Activated T-helper 2 cell treated with anti-CD3 and anti-CD28 coated beads, Interferon-gamma antibody, Interleukin-2, Interleukin-4, amounts not matched to agents 10 μg/mL and 5 μg/mL and 100 μg/mL, durations not matched to agents 14 hours and 24 hours and 36 hours (primary cell): ENCODE measurements at regions of chr1 and their contacts with region 1.

Region 1: DNA sequence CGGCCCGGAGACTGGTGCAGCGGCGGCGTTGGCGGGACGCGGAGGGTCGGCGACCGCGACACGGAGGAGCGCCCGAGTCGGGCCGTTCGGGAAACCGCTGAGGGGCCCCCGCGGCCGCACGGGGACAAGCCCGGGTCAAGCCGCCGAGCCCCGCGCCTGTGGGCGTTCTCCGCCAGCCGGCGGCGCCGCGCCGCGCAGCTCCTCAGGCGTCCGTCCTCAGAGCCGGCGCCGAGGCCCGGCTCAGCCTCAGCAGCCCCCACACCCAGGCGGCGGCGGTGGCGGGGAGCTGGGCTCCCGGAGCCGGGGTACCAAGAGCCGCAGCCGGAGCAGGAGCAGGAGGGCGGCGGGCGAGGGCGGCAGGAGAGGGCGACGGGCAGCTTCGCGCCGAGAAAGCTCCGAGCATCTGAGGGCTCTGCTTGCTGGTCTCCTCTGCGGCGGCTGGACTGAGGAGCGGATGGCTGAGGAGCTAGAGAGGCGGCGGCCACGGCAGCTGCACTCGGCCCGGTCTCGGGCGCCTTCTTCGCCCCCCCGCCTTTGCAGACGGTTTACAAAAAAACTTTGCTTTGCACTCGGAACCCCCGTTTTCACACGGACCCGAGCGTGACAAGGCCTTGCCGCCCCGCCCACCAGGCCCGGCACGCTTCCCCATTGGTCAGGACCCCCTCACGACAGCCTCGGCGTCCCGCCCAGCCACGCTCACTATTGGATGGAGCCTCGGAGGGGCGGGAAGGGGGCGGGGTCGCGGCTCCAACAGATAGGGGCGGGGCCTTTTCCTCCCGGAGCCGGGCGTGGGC is at the start of gene SLC30A1:
- DNase-seq: peak; percentile 99
- H3K4me3 Mint-ChIP-seq: peak within 1 kb of the TSS; percentile 91
- H3K27ac Mint-ChIP-seq: peak within 1 kb of the TSS; percentile 86
- H3K4me1 Mint-ChIP-seq: peaks cover 41% of the 10 kb centered on the region
- H3K27me3 Mint-ChIP-seq: no peaks in the 10 kb centered on the region
- total RNA-seq, gene SLC30A1: 7.9 and 8.0 TPM in 2 replicates

Region 2: GRCh38 chr1:211258756-211259637 is 319.8 kb before region 1 on chr1 and contains the start of gene RCOR3:
- intact Hi-C with region 1: loop called (anchors 1 kb)
- DNase-seq: peak; percentile 91
- H3K4me3 Mint-ChIP-seq: peak within 1 kb of the TSS; percentile 88
- H3K27ac Mint-ChIP-seq: peak within 1 kb of the TSS; percentile 92
- H3K4me1 Mint-ChIP-seq: peaks cover 19% of the 10 kb centered on the region
- H3K27me3 Mint-ChIP-seq: no peaks in the 10 kb centered on the region
- total RNA-seq, gene RCOR3: 42.3 and 45.0 TPM in 2 replicates

Region 3: DNA sequence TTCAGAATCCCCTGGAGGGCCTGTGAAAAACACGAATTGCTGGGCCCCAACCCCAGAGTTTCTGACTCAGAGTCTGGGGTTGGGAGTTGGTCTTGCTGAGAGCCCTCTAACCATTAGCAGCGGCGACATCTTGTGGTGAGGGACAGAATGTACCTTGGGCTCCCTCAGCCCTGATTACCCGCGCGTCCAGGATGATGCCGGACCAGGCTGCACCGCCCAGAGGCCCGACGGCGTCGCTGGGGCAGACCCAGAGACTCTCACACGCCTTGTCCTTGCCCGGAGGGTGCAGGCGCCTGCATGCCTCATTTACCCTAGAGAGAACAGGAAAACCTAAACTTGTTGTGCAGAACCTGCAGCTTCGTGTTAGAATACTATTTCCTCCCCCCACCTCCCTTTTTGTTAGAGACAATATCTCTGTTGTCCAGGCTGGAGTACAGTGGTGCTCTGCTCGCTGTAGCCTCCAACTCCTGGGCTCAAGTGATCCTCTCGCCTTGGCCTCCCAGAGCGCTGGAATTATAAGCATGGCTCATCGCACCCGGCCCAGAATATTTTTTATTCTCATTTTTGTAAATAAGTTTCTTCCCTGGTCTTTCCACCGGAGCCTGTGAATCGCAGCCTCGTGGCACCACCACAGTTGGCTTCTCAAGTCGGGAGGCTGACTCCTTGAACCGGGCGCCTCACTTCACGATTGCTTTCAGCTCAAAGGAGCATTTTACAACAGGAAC is 64.6 kb before region 1 on chr1:
- intact Hi-C with region 1: loop called (anchors 1 kb)
- DNase-seq: peak; percentile 65
- H3K4me3 Mint-ChIP-seq: peak overlapping the region; percentile 65
- H3K27ac Mint-ChIP-seq: peak overlapping the region; percentile 44
- H3K4me1 Mint-ChIP-seq: peaks cover 30% of the 10 kb centered on the region
- H3K27me3 Mint-ChIP-seq: peaks cover 7% of the 10 kb centered on the region

Region 4: DNA sequence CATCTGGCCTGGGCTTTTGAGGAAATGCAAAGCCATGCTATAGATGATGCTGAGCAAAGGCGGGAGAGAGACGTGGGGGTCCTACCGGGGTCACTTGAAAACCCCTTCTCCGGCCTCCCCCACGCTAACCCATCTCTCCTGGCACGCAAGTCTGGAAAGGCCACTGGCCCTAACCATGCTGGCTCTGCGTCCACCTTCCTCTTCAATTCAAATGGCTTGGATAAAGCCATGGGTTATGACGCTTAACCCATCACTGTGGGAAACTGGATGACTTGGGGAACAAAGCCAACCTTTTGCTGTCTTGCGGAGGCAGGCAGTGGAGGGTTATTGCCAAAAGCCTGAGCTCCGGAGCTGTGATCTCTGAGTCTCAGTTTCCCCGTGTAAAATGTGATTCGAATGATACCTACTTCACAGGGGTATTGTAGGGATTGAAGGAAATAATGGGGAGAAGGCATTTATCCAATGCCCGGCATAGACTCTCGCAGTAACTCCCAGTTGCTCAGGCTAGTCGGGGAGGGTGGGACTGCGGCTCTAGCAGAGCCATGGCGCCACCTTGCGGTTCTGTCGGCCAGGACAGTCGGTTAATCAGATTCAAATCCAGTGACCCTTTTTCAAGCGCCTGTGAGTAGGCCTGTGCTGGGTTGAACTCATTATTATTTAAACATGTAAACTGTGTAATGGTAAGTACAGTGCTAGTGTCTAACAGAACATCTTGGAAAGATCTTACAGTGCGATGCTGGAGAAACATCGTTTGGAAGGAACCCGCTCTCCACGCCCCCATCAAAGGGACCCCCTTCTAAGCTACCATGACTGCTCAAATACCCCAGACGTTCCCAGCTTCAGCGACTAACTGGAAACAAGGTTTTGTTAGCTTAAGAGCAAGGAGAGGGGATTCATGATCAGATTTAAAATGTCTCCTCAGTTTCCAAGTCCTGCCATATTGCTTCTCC is 76.3 kb after region 1 on chr1:
- intact Hi-C with region 1: loop called (anchors 1 kb)
- DNase-seq: peak; percentile 72
- H3K4me3 Mint-ChIP-seq: no peak overlapping the region
- H3K27ac Mint-ChIP-seq: no peak overlapping the region
- H3K4me1 Mint-ChIP-seq: peaks cover 5% of the 10 kb centered on the region
- H3K27me3 Mint-ChIP-seq: peaks cover 3% of the 10 kb centered on the region

Region 5: DNA sequence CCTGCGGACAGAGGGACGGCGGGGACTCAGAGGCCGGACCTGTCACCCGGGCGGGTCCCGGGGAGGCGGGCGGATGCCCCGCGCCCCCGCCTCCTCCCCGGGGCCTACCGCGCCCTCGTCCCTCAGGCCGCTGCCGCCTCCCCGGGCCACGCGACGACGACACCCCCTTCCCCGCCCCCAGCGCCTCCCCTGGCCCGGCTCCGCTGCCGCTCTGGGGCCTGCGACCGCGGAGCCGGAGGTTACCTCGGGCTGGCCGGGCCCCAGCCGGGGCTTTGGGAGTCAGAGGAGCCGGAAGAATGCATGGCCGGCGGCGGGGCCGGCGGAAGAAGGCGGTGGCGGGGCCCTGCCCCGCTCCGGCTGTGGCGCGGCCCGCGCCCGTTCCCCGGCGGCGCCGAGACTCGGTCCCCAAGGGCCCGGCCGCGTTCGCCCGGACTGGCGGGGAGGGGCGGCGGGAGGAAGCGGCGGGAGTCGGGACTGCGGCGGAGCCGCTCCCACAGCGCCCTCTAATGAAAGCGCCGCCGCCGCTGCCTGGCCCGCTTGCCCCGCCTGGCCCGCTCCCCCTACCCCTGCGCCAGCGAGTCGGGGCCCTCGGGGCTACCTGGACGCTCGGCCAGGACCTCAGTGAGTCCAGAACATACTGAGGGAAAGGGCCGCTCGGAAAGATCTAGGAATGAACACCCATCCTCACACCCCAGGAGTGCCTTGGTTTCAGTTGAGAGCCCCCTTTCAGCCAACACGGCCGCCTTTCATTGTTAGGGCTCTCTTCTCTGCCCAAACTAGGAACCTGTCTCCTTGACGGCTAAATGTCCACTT is 251.7 kb after region 1 on chr1 and contains the start of gene LPGAT1:
- intact Hi-C with region 1: loop called (anchors 10 kb)
- DNase-seq: peak; percentile 67
- H3K4me3 Mint-ChIP-seq: peak within 1 kb of the TSS; percentile 92
- H3K27ac Mint-ChIP-seq: peak within 1 kb of the TSS; percentile 78
- H3K4me1 Mint-ChIP-seq: peaks cover 55% of the 10 kb centered on the region
- H3K27me3 Mint-ChIP-seq: peaks cover 6% of the 10 kb centered on the region
- total RNA-seq, gene LPGAT1: 27.8 and 31.1 TPM in 2 replicates

Region 6: GRCh38 chr1:212035123-212035834 is 456.4 kb after region 1 on chr1 and contains the starts of genes DTL and INTS7:
- intact Hi-C with region 1: loop called (anchors 1 kb)
- DNase-seq: peak; percentile 99
- H3K4me3 Mint-ChIP-seq: peak within 1 kb of the TSS; percentile 95
- H3K27ac Mint-ChIP-seq: peak within 1 kb of the TSS; percentile 85
- H3K4me1 Mint-ChIP-seq: peaks cover 58% of the 10 kb centered on the region
- H3K27me3 Mint-ChIP-seq: no peaks in the 10 kb centered on the region
- total RNA-seq, gene DTL: 73.9 and 77.0 TPM in 2 replicates
- total RNA-seq, gene INTS7: 33.3 and 33.8 TPM in 2 replicates